Activated CD8-positive, alpha-beta T cell treated with anti-CD3 and anti-CD28 coated beads for 36 hours (primary cell): ENCODE measurements at regions of chrX and their contacts with region 1.

Region 1: GRCh38 chrX:153667956-153668396 is 5.6 kb downstream of the PNCK start:
- DNase-seq: peak; percentile 89
- ATAC-seq: peak; percentile 93
- H3K4me3 Mint-ChIP-seq: peak overlapping the region; percentile 69
- H3K27ac Mint-ChIP-seq: no peak overlapping the region
- H3K4me1 Mint-ChIP-seq: peaks cover 2% of the 10 kb centered on the region
- H3K27me3 Mint-ChIP-seq: peaks cover 15% of the 10 kb centered on the region
- CTCF ChIP-seq: peak; percentile 65

Region 2: DNA sequence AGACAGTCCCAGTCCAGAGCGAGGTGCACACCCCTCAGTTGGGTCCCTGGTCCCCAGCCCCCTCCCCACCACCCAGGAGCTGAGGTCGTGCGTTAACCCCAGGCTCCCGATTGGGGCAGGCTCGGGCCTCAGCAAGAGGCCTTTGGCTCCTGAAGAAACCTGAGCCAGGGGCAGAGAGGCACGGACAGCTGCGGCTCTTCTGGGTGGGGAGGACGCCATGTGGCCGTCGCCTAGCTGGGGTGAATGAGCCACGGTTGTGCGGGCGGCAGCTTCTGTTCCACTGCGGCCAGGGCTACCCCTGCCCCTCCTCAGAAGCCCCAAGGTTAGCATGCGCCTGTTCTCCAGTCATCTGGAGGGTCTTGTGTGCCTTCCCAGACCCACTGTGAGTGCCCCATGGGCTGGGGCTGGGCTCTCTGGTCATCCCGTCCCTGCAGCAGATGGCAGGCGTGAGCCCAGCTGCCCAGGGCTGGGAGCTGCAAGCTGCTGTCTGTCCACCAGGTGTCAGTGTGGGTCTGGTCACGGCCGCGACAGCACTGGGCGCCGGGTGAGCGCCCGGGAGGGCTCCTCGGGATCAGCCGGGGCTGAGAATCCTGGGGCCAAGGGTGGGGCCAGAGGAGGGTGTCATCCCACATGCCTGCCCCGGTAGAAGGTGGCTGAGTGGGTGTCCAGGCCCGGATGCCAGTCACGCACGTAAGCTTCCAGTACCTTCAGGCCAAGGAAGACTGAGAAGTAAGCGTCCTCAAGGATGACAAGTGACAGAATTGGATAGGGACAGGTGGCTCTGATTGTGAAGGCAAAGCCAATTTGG is 128.6 kb before region 1 on chrX:
- CTCF ChIA-PET with region 1: interaction called, 40 read pairs
- POLR2A ChIA-PET with region 1: interaction called, 3 read pairs
- intact Hi-C with region 1: no loop called
- DNase-seq: peak; percentile 63
- ATAC-seq: peak; percentile 94
- H3K4me3 Mint-ChIP-seq: no peak overlapping the region
- H3K27ac Mint-ChIP-seq: no peak overlapping the region
- H3K4me1 Mint-ChIP-seq: no peaks in the 10 kb centered on the region
- H3K27me3 Mint-ChIP-seq: no peaks in the 10 kb centered on the region
- CTCF ChIP-seq: peak; percentile 63

Region 3: DNA sequence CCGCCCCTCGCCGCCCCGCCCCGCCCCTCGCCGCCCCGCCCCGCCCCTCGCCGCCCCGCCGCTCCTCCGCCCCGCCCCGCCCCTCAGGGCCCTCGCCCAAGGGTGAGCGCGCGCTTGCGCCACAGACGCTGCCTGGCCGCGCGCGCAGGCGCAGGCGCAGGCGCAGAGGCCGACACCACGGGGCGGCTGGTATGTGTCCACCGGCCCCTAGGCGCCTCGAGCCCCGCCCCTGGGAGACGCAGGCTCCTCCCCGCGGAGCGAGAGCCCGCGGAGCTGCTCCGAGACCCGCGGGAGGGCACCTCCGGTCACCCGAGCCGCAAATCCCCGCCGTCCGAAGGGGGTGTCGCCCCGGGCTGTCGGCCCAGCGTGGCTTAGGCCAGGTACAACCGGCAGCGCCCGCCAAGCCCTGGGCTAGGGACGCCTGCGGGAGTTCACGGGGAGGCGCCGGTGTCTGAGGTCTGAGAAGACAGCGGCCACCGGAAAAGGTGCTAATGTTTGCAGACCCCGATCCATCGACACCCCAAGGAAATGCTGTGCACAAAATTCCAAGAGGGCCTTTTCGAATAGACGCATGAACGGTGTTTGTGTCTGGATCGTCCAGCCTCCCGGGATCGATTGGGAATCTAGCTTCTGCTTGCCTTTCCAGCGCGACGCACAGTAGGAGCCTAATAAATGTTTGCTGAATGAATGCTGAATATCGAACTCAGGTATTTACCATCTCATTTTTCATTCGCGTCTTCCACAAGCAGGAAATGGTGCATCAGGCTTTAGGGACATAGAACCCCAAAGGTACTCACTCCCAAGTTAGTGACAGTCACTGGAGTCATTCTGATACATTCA is 68.6 kb before region 1 on chrX:
- CTCF ChIA-PET with region 1: interaction called, 8 read pairs
- POLR2A ChIA-PET with region 1: no interaction called
- intact Hi-C with region 1: loop called (anchors 10 kb)
- DNase-seq: peak; percentile 88
- ATAC-seq: peak; percentile 96
- H3K4me3 Mint-ChIP-seq: peak overlapping the region; percentile 82
- H3K27ac Mint-ChIP-seq: peak overlapping the region; percentile 74
- H3K4me1 Mint-ChIP-seq: peaks cover 35% of the 10 kb centered on the region
- H3K27me3 Mint-ChIP-seq: no peaks in the 10 kb centered on the region
- CTCF ChIP-seq: no peak

Region 4: DNA sequence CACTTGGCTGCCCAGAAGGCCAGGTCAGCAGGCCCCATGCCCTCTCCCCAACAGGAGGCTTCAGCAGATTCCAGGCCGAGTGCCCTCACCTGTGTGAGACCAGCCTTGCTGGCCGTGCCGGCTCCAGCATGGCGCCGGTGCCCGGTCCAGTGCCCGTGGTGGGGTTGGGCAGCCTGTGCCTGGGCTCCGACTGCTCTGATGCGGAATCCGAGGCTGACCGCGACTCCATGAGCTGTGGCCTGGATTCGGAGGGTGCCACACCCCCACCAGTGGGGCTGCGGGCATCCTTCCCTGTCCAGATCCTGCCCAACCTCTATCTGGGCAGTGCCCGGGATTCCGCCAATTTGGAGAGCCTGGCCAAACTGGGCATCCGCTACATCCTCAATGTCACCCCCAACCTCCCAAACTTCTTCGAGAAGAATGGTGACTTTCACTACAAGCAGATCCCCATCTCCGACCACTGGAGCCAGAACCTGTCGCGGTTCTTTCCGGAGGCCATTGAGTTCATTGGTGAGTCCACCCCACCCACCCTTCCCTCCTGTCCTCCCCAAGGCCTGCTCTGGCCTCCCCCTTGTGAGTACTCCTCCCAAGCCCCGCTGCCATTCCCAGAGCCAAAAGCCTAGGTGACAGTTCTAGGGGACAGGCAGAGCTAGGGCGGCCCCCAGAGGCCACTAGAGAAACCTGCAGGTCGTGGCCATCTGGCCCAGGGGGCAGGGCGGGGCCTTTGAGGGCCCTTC is 18.6 kb before region 1 on chrX:
- CTCF ChIA-PET with region 1: interaction called, 29 read pairs
- POLR2A ChIA-PET with region 1: interaction called, 3 read pairs
- intact Hi-C with region 1: no loop called
- DNase-seq: peak; percentile 55
- ATAC-seq: peak; percentile 91
- H3K4me3 Mint-ChIP-seq: no peak overlapping the region
- H3K27ac Mint-ChIP-seq: no peak overlapping the region
- H3K4me1 Mint-ChIP-seq: peaks cover 2% of the 10 kb centered on the region
- H3K27me3 Mint-ChIP-seq: peaks cover 23% of the 10 kb centered on the region
- CTCF ChIP-seq: peak; percentile 57